Cardiac septum (tissue), 1 donor: ENCODE measurements at regions of chr12 and their contacts with region 1.

Region 1: GRCh38 chr12:6533923-6534694 is at the start of gene GAPDH:
- DNase-seq: peak; percentile 97
- total RNA-seq, gene GAPDH: 4,827 TPM

Region 2: DNA sequence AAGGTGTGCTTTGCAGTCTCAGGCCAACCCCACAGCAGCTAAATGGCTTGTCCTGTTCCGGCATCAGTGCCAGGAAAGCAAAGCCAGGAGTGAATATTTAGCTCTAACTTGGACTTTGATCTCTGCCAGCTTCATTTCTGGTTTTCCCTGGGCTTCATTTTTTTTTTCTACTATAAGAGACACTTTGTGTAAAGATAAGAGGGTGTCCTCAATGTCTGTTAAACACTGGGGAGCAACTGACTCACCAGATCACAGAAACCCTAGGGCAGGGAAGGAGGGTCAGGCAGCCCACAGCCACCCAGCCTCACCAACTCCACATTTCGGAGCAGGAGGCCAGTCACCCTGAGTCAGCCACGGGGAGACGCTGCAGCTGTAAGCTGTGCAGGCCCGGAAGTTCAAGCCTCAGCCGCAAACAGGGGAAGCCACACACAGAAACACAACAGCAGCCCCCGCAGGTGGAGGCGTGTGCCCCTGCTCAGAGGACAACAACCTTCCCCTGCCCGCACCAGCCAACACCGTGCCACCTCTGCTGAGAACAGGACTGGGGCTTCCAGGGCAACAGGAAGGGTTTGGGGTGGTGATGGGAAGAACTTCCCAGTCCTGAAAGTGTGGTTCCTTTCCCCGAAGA is 198.5 kb before region 1 on chr12:
- intact Hi-C with region 1: loop called (anchors 5 kb)
- DNase-seq: peak; percentile 94

Region 3: GRCh38 chr12:6423267-6424007 is 110.7 kb before region 1 on chr12:
- intact Hi-C with region 1: loop called (anchors 2 kb)
- DNase-seq: peak; percentile 91

Region 4: GRCh38 chr12:6470375-6471163 is 63.5 kb before region 1 on chr12 and contains the start of gene VAMP1:
- intact Hi-C with region 1: loop called (anchors 5 kb)
- DNase-seq: peak; percentile 99
- total RNA-seq, gene VAMP1: 4.1 TPM

Region 5: GRCh38 chr12:6493497-6494257 is 40.4 kb before region 1 on chr12 and contains the start of gene NCAPD2:
- intact Hi-C with region 1: loop called (anchors 2 kb)
- DNase-seq: peak; percentile 98
- total RNA-seq, gene NCAPD2: 12.0 TPM

Region 6: DNA sequence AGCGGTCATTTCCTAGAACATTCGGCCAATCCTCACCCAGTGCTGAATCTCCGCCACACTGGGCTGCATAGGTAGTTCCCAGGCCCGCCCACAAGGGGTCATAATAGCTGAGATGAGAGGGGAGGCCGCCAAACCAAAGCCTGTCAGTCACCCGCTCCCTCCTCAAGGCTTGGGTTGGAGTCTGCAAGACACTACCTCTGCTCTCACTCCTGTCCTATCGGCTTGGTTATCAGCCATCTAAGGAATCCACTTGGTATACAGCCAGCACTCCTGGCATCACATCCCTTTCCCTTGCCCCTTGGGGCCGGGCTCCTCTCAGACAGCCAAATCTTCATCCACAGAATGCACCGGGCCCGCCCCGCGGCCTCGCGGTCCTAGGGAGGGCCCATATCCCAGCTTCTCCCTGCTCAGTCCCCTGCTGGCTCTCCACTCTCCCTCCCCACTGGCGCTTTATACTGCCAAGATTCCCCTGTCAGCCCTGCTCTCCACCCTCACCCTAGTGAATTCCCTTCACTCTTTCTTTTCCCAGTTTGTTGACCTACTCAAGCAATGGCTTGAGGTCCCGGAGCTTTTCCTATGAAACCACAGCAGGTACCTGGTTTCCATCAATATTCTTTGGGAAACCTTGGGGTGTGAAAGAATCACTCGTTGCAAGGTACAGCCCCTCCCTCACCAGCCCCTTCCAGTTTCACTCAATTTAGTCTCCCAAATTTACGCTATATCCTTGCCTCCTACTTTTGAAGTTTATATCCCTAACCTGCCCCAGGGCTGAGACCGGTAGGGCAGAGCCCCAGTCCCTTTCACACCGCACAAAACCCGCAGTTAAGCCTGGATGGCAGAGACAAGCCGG is 20.3 kb after region 1 on chr12:
- intact Hi-C with region 1: loop called (anchors 1 kb)
- DNase-seq: peak; percentile 92